ENCODE measurements at regions of chr10 and their contacts with region 1.

Region 1: GRCh38 chr10:11782793-11783557 is 40.2 kb upstream of the PROSER2 start:
- DNase-seq: peak; percentile 58
- ATAC-seq: peak; percentile 92
- H3K4me3 ChIP-seq: no peak overlapping the region
- H3K27ac ChIP-seq: no peak overlapping the region
- H3K4me1 ChIP-seq: no peaks in the 10 kb centered on the region
- H3K27me3 ChIP-seq: peaks cover 14% of the 10 kb centered on the region
- CTCF ChIP-seq: peak; percentile 77
- POLR2A ChIP-seq: no peak
- RAD21 ChIP-seq: peak; percentile 56

Region 2: DNA sequence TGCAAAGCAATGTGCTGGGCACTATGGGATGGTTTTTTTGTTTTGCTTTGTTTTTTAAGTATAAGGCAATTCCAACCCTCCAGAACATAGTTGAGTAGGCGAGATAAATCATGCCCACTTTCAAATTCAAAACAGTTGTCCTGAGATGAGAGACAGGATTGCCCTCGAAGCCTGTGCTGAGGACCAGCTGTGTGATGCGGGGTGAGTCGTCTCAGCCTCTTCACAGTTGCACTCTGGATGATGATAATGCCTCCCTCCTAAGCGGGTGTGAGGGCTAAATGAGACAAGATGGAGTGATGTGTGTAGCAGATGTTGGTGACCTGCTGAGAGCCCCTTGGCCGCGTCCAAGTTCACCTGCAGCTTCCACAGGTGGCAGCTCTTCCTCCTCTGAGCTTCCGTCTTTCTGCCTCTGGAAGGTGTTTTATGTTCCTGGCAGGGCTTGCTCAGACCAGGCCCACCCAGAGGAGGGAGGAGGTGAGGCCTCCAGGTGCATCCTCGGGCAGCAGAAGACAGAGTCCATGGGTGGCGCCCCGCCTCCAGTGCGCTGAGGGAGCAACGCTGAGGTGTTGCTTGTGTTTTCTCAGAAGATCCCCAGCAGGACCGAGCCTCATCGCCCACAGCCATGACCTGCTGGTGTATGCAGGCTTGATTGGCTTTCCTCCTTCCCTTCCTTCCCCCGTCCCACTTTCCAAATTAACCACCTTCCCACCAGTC is 10.2 kb before region 1 on chr10:
- CTCF ChIA-PET with region 1: interaction called, 12 read pairs
- POLR2A ChIA-PET with region 1: no interaction called
- dilution Hi-C with region 1: no loop called
- in situ Hi-C with region 1: no loop called
- intact Hi-C with region 1: no loop called
- DNase-seq: peak; percentile 12
- ATAC-seq: no peak
- H3K4me3 ChIP-seq: no peak overlapping the region
- H3K27ac ChIP-seq: no peak overlapping the region
- H3K4me1 ChIP-seq: no peaks in the 10 kb centered on the region; the same call in 1 of the 2 replicates
- H3K27me3 ChIP-seq: peaks cover 16% of the 10 kb centered on the region
- CTCF ChIP-seq: no peak
- POLR2A ChIP-seq: no peak
- RAD21 ChIP-seq: no peak

Region 3: GRCh38 chr10:11986593-11987216 is 203.7 kb after region 1 on chr10:
- CTCF ChIA-PET with region 1: interaction called, 14 read pairs
- POLR2A ChIA-PET with region 1: no interaction called
- dilution Hi-C with region 1: no loop called
- in situ Hi-C with region 1: no loop called
- intact Hi-C with region 1: loop called (anchors 1 kb)
- DNase-seq: peak; percentile 84
- ATAC-seq: peak; percentile 89
- H3K4me3 ChIP-seq: no peak overlapping the region
- H3K27ac ChIP-seq: no peak overlapping the region
- H3K4me1 ChIP-seq: no peaks in the 10 kb centered on the region
- H3K27me3 ChIP-seq: no peaks in the 10 kb centered on the region
- CTCF ChIP-seq: peak; percentile 89
- POLR2A ChIP-seq: no peak
- RAD21 ChIP-seq: peak; percentile 86

Measured in IMR-90 (cell line).